ENCODE measurements at regions of chr17 and their contacts with region 1.

Region 1: GRCh38 chr17:80866147-80866793 is 125.4 kb upstream of the CHMP6 start:
- DNase-seq: no peak
- H3K4me3 ChIP-seq: no peak overlapping the region
- CTCF ChIP-seq: peak; percentile 79

Region 2: DNA sequence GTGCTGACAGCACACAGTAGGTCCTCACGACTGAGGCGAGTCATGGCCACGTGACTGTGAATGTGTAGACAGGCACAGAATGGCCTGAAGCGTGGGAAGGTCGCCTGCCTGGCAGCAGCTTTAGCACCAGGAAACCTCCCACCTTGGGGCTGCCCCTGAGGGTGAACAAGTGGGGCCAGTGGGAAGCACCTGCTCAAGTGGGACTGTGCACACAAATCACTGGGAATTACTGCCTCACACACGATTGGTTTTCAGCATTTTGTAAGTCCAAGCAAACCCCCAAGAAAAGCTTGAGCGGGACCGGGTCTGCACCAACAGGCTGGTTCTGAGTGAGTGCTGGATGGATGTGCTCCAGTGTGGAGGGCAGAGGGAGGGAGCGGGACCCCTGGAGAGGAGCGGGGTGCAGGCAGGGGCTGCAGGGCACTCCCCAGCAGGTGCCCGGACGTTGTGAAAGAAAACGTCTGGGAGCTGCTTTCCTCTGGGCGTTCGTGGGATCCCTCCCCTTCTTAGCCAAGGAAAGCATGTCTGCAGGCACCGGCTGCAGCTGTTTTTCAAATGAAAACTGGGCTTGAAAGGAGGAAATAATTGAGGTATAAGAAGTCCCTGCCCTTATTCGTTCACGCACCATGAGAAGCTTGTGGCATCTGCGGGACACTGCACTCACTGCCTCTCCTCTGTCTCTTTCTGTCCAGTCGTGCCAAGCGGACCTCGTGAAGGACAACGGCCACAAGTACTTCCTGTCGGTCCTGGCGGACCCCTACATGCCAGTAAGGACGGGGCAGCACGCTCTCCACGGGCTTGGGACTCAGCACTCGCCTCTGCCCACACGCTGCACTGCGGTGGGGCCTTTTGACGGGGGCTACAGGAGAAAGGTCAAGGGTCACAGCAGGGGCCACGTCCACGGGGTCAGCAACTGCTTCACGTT is 13.7 kb after region 1 on chr17:
- CTCF ChIA-PET with region 1: interaction called, 17 read pairs
- POLR2A ChIA-PET with region 1: no interaction called
- DNase-seq: no peak
- H3K4me3 ChIP-seq: no peak overlapping the region
- CTCF ChIP-seq: no peak

Region 3: DNA sequence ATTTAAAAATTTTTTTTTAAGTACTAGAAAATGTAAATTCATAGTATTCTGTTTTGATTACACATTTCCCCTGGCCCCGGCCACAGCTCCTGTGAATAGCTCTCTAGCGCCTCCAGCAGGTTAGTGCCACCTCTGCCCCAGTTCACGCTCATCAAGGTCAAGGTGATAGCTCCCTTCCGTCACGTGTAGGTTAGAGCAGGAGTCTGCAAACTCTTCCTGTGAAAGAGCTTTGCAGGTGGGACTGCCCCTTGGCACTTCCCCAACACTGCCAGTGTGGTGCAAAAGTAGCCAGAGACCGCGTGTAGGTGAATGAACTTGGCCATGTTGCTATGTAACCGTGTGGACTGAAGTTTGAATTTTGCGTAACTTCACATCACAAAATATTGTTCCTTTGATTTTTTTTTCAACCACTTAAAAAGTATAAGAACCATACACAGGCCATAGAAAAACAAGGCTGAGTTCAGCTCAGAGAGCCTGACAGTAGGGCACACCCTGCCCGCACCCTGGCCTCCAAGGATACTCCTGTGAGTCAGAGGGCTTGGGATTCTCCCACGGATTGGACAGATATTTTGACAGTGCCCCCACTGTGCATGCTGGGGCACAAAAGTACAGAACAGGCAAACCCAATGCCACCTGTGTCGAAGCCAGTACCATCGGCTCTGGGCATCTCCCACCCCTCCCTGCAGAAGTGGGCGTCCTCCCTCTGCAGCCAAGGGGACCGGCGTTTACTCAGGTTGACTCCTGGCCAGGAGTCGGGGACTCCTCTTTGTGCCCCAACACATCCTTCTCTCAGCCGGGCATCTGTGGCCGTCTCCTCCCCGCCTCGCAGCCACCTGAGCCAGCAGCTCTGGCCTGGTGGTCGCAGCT is 33.4 kb after region 1 on chr17:
- CTCF ChIA-PET with region 1: interaction called, 14 read pairs
- POLR2A ChIA-PET with region 1: no interaction called
- DNase-seq: no peak
- H3K4me3 ChIP-seq: no peak overlapping the region
- CTCF ChIP-seq: peak; percentile 49